MCF 10A (cell line): ENCODE measurements at regions of chr1 and their contacts with region 1.

Region 1: DNA sequence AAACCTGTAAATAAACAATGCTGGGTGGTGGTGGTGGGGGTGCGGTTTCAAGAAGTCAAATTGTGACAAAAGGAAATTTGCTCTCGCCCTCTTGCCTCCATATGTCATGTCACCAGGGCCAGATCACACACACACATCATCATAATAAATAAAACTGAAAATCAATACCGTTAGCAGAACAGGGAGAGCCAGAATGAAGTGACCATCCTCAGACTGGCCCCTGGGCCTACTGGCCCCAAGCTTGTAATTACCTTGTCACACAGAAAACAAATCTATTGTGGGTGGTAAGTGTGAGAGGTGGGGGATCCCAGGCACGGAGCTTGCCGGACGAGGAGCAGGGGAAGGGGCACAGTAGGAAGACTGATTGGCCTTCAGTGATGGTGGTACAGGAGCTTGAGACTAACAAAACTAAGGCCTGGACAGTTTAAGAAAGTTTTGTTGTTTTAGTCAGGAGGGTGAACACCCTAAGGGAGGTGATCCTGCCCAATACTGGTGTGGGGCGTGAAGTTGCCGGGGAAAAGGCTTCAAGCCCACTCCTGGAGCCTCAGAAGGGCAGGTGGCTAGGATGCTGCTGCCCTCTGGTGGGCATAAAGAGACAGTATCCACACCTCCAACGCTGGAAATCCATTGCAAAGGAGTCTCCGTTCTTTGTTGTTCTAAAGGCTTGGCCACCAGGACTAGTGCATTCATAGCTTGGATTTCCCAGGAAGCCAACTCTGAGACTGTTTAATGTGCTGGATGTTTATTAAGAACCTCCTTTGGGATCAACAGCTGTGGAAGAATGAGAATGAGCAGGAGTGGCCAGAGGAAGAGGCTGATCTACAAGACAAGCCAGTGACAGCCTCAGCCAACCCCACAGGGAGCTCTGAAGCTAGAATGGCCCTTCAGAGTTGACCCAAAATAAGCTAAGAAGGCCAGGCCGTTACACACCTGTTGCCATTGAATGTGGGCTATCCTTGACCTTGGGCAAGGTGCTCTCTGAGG is 8.1 kb upstream of the C1orf216 start:
- DNase-seq: peak; percentile 60
- H3K4me3 Mint-ChIP-seq: no peak overlapping the region
- H3K27ac Mint-ChIP-seq: no peak overlapping the region
- H3K4me1 Mint-ChIP-seq: no peaks in the 10 kb centered on the region
- H3K27me3 Mint-ChIP-seq: no peaks in the 10 kb centered on the region
- CTCF ChIP-seq: peak; percentile 86

Region 2: GRCh38 chr1:35390600-35391494 is 335.9 kb before region 1 on chr1:
- CTCF ChIA-PET with region 1: interaction called, 11 read pairs
- POLR2A ChIA-PET with region 1: no interaction called
- intact Hi-C with region 1: no loop called
- DNase-seq: no peak
- H3K4me3 Mint-ChIP-seq: no peak overlapping the region
- H3K27ac Mint-ChIP-seq: no peak overlapping the region
- H3K4me1 Mint-ChIP-seq: no peaks in the 10 kb centered on the region
- H3K27me3 Mint-ChIP-seq: no peaks in the 10 kb centered on the region
- CTCF ChIP-seq: no peak

Region 3: GRCh38 chr1:35524106-35524505 is 202.6 kb before region 1 on chr1:
- CTCF ChIA-PET with region 1: no interaction called
- POLR2A ChIA-PET with region 1: no interaction called
- intact Hi-C with region 1: no loop called
- DNase-seq: no peak
- H3K4me3 Mint-ChIP-seq: no peak overlapping the region
- H3K27ac Mint-ChIP-seq: no peak overlapping the region
- H3K4me1 Mint-ChIP-seq: no peaks in the 10 kb centered on the region
- H3K27me3 Mint-ChIP-seq: no peaks in the 10 kb centered on the region
- CTCF ChIP-seq: no peak

Region 4: GRCh38 chr1:35564037-35564883 is 162.5 kb before region 1 on chr1:
- CTCF ChIA-PET with region 1: interaction called, 158 read pairs
- POLR2A ChIA-PET with region 1: interaction called, 3 read pairs
- intact Hi-C with region 1: loop called (anchors 1 kb)
- DNase-seq: peak; percentile 90
- H3K4me3 Mint-ChIP-seq: no peak overlapping the region
- H3K27ac Mint-ChIP-seq: no peak overlapping the region
- H3K4me1 Mint-ChIP-seq: peaks cover 32% of the 10 kb centered on the region
- H3K27me3 Mint-ChIP-seq: no peaks in the 10 kb centered on the region
- CTCF ChIP-seq: peak; percentile 79

Region 5: GRCh38 chr1:35605071-35605881 is 121.5 kb before region 1 on chr1:
- CTCF ChIA-PET with region 1: interaction called, 15 read pairs
- POLR2A ChIA-PET with region 1: no interaction called
- intact Hi-C with region 1: no loop called
- DNase-seq: no peak
- H3K4me3 Mint-ChIP-seq: no peak overlapping the region
- H3K27ac Mint-ChIP-seq: peak overlapping the region; percentile 35
- H3K4me1 Mint-ChIP-seq: peaks cover 6% of the 10 kb centered on the region
- H3K27me3 Mint-ChIP-seq: no peaks in the 10 kb centered on the region
- CTCF ChIP-seq: no peak

Region 6: GRCh38 chr1:35715568-35716002 is 11.2 kb before region 1 on chr1:
- CTCF ChIA-PET with region 1: interaction called, 69 read pairs
- POLR2A ChIA-PET with region 1: interaction called, 5 read pairs
- intact Hi-C with region 1: no loop called
- DNase-seq: peak; percentile 82
- H3K4me3 Mint-ChIP-seq: no peak overlapping the region
- H3K27ac Mint-ChIP-seq: no peak overlapping the region
- H3K4me1 Mint-ChIP-seq: peaks cover 37% of the 10 kb centered on the region
- H3K27me3 Mint-ChIP-seq: no peaks in the 10 kb centered on the region
- CTCF ChIP-seq: peak; percentile 80

Region 7: DNA sequence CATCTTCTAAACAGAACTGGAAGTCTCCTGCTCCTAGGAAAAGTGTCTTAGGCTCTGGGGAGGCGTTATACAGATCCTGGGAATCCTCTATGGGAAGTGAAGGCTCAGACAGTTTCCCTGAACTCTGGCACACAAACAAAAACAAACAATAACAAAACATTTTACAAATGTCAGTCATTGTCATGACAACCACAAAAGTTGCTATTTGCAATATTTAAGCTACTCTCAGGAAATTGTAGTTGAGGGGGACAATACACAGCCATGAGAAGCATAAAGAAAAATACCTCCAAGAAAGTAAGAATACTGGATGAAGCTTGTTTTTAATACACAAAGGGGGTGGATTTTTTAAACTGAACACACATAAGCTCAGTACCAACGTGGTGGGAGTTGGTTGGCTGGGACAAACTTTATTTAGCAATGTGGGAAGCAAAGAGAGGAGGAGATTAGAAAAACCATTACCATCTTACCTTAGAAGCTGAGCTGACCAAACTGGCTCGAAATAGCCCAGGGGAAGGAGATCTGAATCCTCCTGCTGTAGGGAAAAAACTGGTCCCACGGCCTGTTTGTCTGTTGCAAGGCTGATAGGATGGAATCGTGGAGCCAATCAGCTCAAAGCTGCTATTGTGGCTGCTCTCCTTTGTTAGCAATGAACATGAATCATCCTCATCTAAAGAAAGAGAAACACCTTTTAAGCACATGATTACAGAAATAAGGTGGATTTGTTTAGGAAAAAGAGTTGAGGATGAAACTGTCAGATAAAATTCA is 21.4 kb after region 1 on chr1:
- CTCF ChIA-PET with region 1: interaction called, 59 read pairs
- POLR2A ChIA-PET with region 1: no interaction called
- intact Hi-C with region 1: no loop called
- DNase-seq: no peak
- H3K4me3 Mint-ChIP-seq: no peak overlapping the region
- H3K27ac Mint-ChIP-seq: no peak overlapping the region
- H3K4me1 Mint-ChIP-seq: no peaks in the 10 kb centered on the region
- H3K27me3 Mint-ChIP-seq: no peaks in the 10 kb centered on the region
- CTCF ChIP-seq: no peak

Region 8: DNA sequence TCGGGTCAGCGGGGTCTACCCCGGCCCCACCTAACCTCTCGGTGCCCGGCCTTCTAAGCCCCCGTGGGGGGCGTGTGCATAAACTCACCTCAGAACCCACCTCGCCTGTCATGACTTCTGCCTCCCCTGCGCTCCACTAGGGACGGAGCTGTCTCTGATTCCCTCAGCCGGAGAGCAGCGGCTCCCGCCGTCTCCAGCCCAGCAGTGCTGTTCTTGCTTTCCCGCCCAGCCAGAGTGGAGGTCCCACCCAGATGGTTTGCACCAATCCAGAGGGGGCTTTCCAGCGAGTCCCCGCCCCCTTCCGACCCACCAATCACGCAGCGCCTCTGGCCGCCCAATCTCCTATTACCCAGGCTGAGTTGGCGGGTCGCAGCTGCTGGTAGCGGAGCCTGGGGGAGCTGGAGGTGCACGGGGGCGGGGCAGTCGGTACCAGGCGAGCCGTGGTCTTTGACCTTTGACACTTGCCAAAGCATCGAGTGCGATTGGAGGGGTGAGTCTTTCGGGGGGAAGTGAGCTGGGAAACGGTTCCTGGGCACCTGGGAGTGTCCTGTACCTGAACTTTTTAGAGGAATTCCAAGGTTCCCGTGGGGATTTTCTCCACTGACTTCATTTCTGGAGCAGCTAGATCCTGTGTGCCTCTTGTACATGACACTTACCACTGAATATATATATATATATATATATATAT is 43.2 kb after region 1 on chr1 and contains the start of gene CLSPN:
- CTCF ChIA-PET with region 1: interaction called, 15 read pairs
- POLR2A ChIA-PET with region 1: interaction called, 8 read pairs
- intact Hi-C with region 1: no loop called
- DNase-seq: peak; percentile 96
- H3K4me3 Mint-ChIP-seq: peak within 1 kb of the TSS; percentile 99
- H3K27ac Mint-ChIP-seq: peak within 1 kb of the TSS; percentile 69
- H3K4me1 Mint-ChIP-seq: no peaks in the 10 kb centered on the region
- H3K27me3 Mint-ChIP-seq: no peaks in the 10 kb centered on the region
- CTCF ChIP-seq: no peak
- total RNA-seq, gene CLSPN: 1.6 and 4.3 TPM in 2 replicates